ENCODE measurements at regions of chr11 and their contacts with region 1.

Region 1: GRCh38 chr11:114257621-114258558 is 38.3 kb upstream of the NNMT start:
- DNase-seq: peak; percentile 74 to 88 (median 78)
- H3K4me3 ChIP-seq: peak overlapping the region; percentile 15
- H3K27ac ChIP-seq: peak overlapping the region; percentile 78 to 94
- H3K4me1 ChIP-seq: peaks cover 8% of the 10 kb centered on the region
- H3K27me3 ChIP-seq: no peaks in the 10 kb centered on the region
- CTCF ChIP-seq: peak in 1 of 3 donors; percentile 34
- EP300 ChIP-seq: no peak
- POLR2A ChIP-seq: peak; percentile 28

Region 2: DNA sequence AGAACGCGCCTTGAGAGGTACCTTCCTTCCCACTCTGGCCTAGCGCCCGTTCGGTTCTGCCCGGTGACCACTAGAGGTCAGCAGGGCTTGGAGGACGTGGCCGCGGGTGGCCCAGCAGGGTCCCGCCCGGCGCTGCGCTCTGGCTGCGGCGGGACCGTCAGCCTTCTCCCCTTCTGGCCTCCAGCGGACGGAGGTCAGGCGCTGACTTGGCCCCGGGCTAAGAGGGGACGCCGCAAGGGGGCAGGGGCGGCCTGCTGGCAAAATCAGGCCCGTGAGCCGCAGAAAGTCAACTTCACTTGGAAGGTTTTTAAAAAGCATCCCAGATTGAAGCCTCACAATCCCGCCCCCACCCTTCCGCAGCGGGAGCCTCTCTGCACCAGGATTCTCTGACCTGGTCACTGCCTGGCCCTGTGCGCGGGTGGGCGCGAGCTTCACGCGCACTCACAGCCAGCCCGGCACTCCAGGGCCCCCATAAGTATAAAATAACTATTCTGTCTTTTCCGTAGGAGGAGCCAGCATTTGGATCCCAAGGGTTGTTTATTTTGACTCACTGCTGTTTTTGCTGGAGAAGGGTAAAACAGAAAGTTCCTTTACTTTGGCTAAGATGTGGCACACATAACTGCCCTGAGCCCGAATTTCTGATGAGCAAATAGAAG is 221.6 kb before region 1 on chr11:
- intact Hi-C with region 1: loop called (anchors 2 to 5 kb)
- DNase-seq: peak; percentile 80 to 90 (median 84)
- H3K4me3 ChIP-seq: peak overlapping the region; percentile 40
- H3K27ac ChIP-seq: peak overlapping the region; percentile 54 to 71
- H3K4me1 ChIP-seq: peaks cover 1% of the 10 kb centered on the region
- H3K27me3 ChIP-seq: no peaks in the 10 kb centered on the region
- CTCF ChIP-seq: peak; percentile 75 to 88 (median 85)
- EP300 ChIP-seq: no peak
- POLR2A ChIP-seq: no peak

Region 3: DNA sequence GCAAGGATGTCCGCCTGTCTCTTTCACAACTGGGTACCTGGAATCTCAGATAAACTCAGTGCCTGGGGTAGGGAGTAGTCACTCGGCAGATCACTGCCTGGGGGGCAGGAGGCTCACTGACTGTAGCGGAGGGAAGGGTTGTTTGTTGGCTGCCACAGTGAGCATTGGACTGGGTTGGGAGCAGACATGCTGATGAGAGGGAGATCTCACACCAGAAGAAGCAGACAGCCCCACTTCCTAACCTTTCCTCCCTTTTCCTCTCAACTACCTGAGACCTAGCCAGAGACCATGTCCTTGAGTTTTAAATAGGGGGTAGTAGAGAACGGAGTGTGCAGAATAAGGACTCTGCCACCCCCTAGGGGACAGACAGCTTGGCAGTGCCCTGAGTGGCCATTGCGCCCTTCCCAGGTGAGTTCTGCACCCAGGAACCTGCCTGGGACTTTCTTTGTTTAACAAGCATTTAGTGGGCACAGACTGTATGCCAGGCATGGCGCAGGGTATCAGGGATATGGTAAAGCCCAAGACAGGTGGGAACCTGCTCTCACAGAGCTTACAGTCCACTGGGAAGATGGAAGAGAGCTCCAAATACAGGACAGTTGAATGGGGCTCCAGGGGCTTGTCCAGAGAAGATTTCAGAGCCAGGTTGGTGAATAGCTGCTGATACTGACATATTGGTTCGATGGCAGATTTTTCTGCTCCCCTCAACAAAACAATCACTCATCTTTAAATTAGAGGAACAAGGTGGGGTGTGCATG is 77.4 kb before region 1 on chr11:
- intact Hi-C with region 1: loop called in 2 of 4 experiments (anchors 1 to 10 kb)
- DNase-seq: peak in 4 of 5 donors; percentile 59 to 68 (median 63)
- H3K4me3 ChIP-seq: peak overlapping the region; percentile 43
- H3K27ac ChIP-seq: peak overlapping the region; percentile 81 to 99
- H3K4me1 ChIP-seq: peaks cover 44% of the 10 kb centered on the region
- H3K27me3 ChIP-seq: no peaks in the 10 kb centered on the region
- CTCF ChIP-seq: peak in 1 of 3 donors; percentile 60
- EP300 ChIP-seq: no peak
- POLR2A ChIP-seq: peak; percentile 30

Region 4: GRCh38 chr11:114197799-114198500 is 59.9 kb before region 1 on chr11:
- intact Hi-C with region 1: loop called in 1 of 4 experiments (anchors 10 kb)
- DNase-seq: peak; percentile 69 to 84 (median 69)
- H3K4me3 ChIP-seq: no peak overlapping the region
- H3K27ac ChIP-seq: peak overlapping the region; percentile 74 to 77
- H3K4me1 ChIP-seq: peaks cover 31% of the 10 kb centered on the region
- H3K27me3 ChIP-seq: no peaks in the 10 kb centered on the region
- CTCF ChIP-seq: no peak
- EP300 ChIP-seq: peak; percentile 78
- POLR2A ChIP-seq: no peak

Region 5: GRCh38 chr11:114215871-114216795 is 41.8 kb before region 1 on chr11:
- intact Hi-C with region 1: no loop called
- DNase-seq: no peak
- H3K4me3 ChIP-seq: no peak overlapping the region
- H3K27ac ChIP-seq: no peak overlapping the region
- H3K4me1 ChIP-seq: peaks cover 28% of the 10 kb centered on the region
- H3K27me3 ChIP-seq: no peaks in the 10 kb centered on the region
- CTCF ChIP-seq: no peak
- EP300 ChIP-seq: no peak
- POLR2A ChIP-seq: no peak